K562 (cell line): ENCODE measurements at regions of chr11 and their contacts with region 1.

Region 1: DNA sequence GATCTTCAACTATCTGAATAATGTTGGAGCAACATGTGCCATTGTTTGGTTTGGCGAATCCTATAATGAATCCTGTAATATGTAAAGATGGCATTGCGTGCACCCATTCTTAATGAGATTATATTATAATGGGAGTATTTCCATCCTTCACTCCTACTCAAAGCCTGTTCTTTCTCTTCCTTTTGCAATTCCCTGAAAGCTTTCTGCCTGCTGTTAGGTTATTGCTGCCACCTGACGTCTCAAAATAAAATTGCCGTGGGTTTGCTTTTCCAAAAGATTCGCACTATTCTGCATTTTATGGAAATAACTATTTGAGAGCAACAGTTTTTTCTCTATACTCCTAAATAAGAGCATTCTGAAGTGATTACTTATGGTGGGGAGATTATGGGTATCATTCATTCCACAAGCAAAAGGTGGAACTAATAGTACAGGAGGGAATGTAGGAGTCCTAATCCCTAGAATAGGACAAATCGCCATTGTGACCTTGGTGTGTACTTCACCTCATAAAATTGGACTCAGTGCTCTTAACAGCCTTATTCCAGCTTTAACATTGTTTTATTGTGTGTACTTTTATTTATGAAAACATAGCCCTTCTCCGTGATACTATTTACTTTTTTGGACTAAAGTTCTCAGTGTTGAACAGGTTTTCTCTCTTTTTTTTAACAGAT is 69.6 kb upstream of the ALKBH3 start:
- DNase-seq: peak; percentile 9 to 33 (median 10)
- ATAC-seq: peak; percentile 31; the same call in 1 of the 3 replicates
- H3K4me3 ChIP-seq: no peak overlapping the region
- H3K27ac ChIP-seq: no peak overlapping the region
- H3K4me1 ChIP-seq: no peaks in the 10 kb centered on the region
- H3K27me3 ChIP-seq: no peaks in the 10 kb centered on the region
- CTCF ChIP-seq: peak; percentile 56 to 78 (median 58); a peak in 5 of 6 replicates
- EP300 ChIP-seq: no peak
- POLR2A ChIP-seq: no peak
- RAD21 ChIP-seq: peak; percentile 87 to 88

Region 2: DNA sequence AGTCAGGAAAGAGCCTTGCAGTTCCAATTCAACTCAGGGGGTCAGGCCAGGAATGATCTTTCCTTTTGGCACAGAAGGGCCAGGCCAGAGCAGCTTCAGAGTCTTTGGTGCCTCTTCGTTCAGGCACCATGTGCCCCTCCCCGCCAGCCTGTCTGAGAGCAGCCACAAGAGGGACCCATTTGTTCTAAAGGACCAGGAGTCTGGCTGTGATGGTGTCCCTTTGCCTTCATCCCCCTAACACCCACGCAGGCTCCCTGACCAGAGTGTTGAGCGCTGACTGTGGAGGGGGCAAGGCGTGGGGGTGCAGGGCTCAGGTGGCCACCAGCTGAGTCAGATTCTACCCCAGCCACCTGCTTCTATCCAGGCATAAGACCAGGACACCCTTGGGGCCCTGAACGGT is 296.0 kb before region 1 on chr11:
- CTCF ChIA-PET with region 1: no interaction called
- POLR2A ChIA-PET with region 1: no interaction called
- in situ Hi-C with region 1: no loop called
- intact Hi-C with region 1: loop called (anchors 10 kb)
- DNase-seq: peak; percentile 47 to 56 (median 52)
- ATAC-seq: peak; percentile 93
- H3K4me3 ChIP-seq: no peak overlapping the region
- H3K27ac ChIP-seq: no peak overlapping the region
- H3K4me1 ChIP-seq: no peaks in the 10 kb centered on the region
- H3K27me3 ChIP-seq: peaks cover 4 to 37% of the 10 kb centered on the region in 2 experiments; a peak in 2 of 5 replicates
- CTCF ChIP-seq: peak; percentile 43 to 66 (median 61)
- EP300 ChIP-seq: no peak
- POLR2A ChIP-seq: no peak
- RAD21 ChIP-seq: peak; percentile 28 to 62; a peak in 3 of 4 replicates

Region 3: DNA sequence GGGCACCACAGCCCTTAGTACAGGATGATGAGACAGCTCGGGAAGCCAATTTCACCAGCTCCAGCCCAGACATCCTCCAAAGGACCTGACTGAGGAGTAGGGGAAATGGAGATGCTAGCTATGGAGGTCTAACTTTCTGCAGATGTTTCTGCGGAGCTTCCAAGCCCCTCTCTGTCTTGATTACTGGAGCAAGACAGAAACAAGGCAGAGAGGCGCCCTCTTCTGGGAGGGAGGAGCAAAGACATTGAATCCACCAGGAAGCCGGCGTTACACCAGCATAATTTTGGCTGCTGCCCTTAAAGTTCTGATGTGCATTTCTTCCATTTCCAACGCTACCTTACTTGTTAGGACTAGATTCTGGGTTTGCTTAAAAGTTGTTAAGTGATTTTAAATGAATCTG is 237.8 kb before region 1 on chr11:
- CTCF ChIA-PET with region 1: interaction called, 5 read pairs
- POLR2A ChIA-PET with region 1: no interaction called
- in situ Hi-C with region 1: no loop called
- intact Hi-C with region 1: loop called (anchors 5 kb)
- DNase-seq: peak; percentile 43 to 60 (median 45)
- ATAC-seq: peak; percentile 76
- H3K4me3 ChIP-seq: no peak overlapping the region
- H3K27ac ChIP-seq: no peak overlapping the region
- H3K4me1 ChIP-seq: peaks cover 0 to 6% of the 10 kb centered on the region in 2 experiments; a peak in 2 of 5 replicates
- H3K27me3 ChIP-seq: peaks cover 21 to 46% of the 10 kb centered on the region in 2 experiments
- CTCF ChIP-seq: peak; percentile 59 to 79 (median 71)
- EP300 ChIP-seq: no peak
- POLR2A ChIP-seq: no peak
- RAD21 ChIP-seq: peak; percentile 44 to 67

Region 4: GRCh38 chr11:43585877-43586608 is 225.0 kb before region 1 on chr11:
- CTCF ChIA-PET with region 1: no interaction called
- POLR2A ChIA-PET with region 1: no interaction called
- in situ Hi-C with region 1: loop called (anchors 10 kb)
- intact Hi-C with region 1: loop called (anchors 5 kb)
- DNase-seq: peak in 1 of 4 experiments; percentile 29
- ATAC-seq: peak; percentile 58
- H3K4me3 ChIP-seq: no peak overlapping the region
- H3K27ac ChIP-seq: no peak overlapping the region
- H3K4me1 ChIP-seq: peaks cover 0 to 5% of the 10 kb centered on the region in 2 experiments; a peak in 2 of 5 replicates
- H3K27me3 ChIP-seq: peaks cover 9 to 39% of the 10 kb centered on the region in 2 experiments; a peak in 4 of 5 replicates
- CTCF ChIP-seq: peak in 2 of 3 experiments; percentile 12 to 39; a peak in 3 of 6 replicates
- EP300 ChIP-seq: no peak
- POLR2A ChIP-seq: no peak
- RAD21 ChIP-seq: peak; percentile 43 to 57

Region 5: DNA sequence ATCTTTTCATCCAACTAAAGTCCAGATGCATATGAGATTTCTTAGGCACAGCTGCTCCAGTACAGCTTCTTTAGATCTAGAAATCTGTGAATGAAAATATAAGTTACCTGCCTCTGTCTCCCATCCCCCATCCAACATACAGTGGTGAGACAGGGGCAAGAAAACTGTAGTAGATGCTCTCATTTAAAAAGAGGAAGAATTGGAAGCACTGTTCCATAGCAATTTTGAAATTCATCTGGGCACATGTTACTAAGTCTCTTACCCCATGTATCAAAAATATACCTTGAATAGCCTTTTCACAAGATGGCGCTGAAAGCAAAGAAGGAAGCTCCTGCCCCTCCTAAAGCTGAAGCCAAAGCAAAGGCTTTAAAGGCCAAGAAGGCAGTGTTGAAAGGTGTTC is 92.7 kb before region 1 on chr11:
- CTCF ChIA-PET with region 1: no interaction called
- POLR2A ChIA-PET with region 1: no interaction called
- in situ Hi-C with region 1: no loop called
- intact Hi-C with region 1: loop called (anchors 1 kb)
- DNase-seq: no peak
- ATAC-seq: no peak
- H3K4me3 ChIP-seq: no peak overlapping the region
- H3K27ac ChIP-seq: no peak overlapping the region
- H3K4me1 ChIP-seq: no peaks in the 10 kb centered on the region
- H3K27me3 ChIP-seq: no peaks in the 10 kb centered on the region
- CTCF ChIP-seq: no peak
- EP300 ChIP-seq: no peak
- POLR2A ChIP-seq: no peak
- RAD21 ChIP-seq: peak in 1 of 2 experiments; percentile 36; a peak in 2 of 4 replicates

Region 6: DNA sequence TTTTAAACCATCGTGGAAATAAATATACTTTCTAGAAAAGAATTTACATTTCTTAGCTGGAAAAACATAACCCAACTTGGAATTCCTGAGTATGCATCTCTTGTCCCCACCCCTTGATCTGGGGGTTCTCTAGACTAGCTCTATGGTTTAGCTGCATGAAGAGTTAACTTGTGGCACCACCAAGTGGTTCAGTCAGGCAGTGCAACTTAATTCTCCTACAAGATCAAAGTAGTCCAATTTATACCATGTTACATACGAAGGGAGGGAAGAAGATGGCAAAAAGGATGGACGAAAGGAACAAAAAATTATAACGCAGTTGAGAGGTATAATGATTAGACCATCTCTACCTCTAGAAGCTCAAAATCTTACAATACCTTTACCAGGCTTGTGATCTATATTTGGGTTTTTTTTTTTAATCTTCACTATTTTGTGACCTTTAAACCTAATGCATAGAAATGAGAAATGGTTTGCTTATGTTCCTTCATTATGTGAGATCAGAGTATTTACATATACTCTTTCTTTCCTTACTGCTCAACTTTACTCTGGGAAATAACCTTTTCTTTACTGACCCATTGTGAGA is 41.1 kb after region 1 on chr11:
- CTCF ChIA-PET with region 1: no interaction called
- POLR2A ChIA-PET with region 1: no interaction called
- in situ Hi-C with region 1: no loop called
- intact Hi-C with region 1: loop called (anchors 5 kb)
- DNase-seq: peak; percentile 62 to 76 (median 66)
- ATAC-seq: peak; percentile 96
- H3K4me3 ChIP-seq: no peak overlapping the region
- H3K27ac ChIP-seq: no peak overlapping the region
- H3K4me1 ChIP-seq: no peaks in the 10 kb centered on the region
- H3K27me3 ChIP-seq: peaks cover 0 to 4% of the 10 kb centered on the region in 2 experiments; a peak in 2 of 5 replicates
- CTCF ChIP-seq: peak; percentile 72 to 84 (median 75)
- EP300 ChIP-seq: no peak
- POLR2A ChIP-seq: no peak
- RAD21 ChIP-seq: peak; percentile 80 to 89